A549 (cell line): ENCODE measurements at regions of chr2 and their contacts with region 1.

Region 1: GRCh38 chr2:85288244-85288725 is 39.5 kb downstream of the TGOLN2 start:
- DNase-seq: peak; percentile 82 to 86
- ATAC-seq: peak; percentile 78 to 83
- H3K4me3 ChIP-seq: no peak overlapping the region
- H3K27ac ChIP-seq: peak overlapping the region; percentile 62 to 82
- H3K4me1 ChIP-seq: peaks cover 31% of the 10 kb centered on the region
- CTCF ChIP-seq: no peak
- EP300 ChIP-seq: no peak
- POLR2A ChIP-seq: no peak
- RAD21 ChIP-seq: no peak

Region 2: GRCh38 chr2:85076618-85077274 is 211.5 kb before region 1 on chr2:
- CTCF ChIA-PET with region 1: interaction called, 22 read pairs
- POLR2A ChIA-PET with region 1: no interaction called
- DNase-seq: no peak
- ATAC-seq: peak; percentile 24 to 48; a peak in 3 of 6 replicates
- H3K4me3 ChIP-seq: no peak overlapping the region
- H3K27ac ChIP-seq: no peak overlapping the region
- H3K4me1 ChIP-seq: no peaks in the 10 kb centered on the region
- CTCF ChIP-seq: no peak
- EP300 ChIP-seq: no peak
- POLR2A ChIP-seq: no peak
- RAD21 ChIP-seq: no peak

Region 3: GRCh38 chr2:85119900-85120299 is 168.4 kb before region 1 on chr2:
- CTCF ChIA-PET with region 1: interaction called, 21 read pairs
- POLR2A ChIA-PET with region 1: no interaction called
- DNase-seq: no peak
- ATAC-seq: peak in 1 of 2 experiments; percentile 36; a peak in 1 of 6 replicates
- H3K4me3 ChIP-seq: no peak overlapping the region
- H3K27ac ChIP-seq: no peak overlapping the region
- H3K4me1 ChIP-seq: no peaks in the 10 kb centered on the region
- CTCF ChIP-seq: no peak
- EP300 ChIP-seq: no peak
- POLR2A ChIP-seq: no peak
- RAD21 ChIP-seq: no peak

Region 4: DNA sequence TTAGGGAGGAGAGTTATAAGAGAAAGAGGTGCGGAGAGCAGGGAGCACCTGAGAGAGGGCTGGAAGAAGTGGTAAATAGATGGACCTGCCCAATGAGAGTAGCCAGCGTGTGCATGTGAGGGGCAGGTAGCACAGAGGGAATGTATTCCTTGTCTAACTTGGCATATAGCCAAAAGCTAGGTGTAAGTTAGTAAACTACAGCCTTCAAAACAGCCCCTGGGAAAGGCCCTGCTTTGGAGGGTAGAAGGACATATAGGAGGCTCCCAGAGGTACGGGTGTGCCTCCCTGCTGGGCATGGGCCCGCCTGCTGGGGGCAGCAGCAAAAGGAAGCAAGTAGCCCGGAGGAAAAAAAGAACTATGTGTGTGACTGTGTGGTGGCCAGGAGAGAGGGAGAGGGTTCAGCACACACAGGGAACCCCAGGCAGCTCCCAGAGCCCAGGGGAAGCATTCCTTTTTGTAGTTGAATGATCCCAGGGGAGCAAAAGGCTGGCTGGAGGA is 107.1 kb before region 1 on chr2:
- CTCF ChIA-PET with region 1: interaction called, 15 read pairs
- POLR2A ChIA-PET with region 1: no interaction called
- DNase-seq: no peak
- ATAC-seq: peak in 1 of 2 experiments; percentile 55; a peak in 3 of 6 replicates
- H3K4me3 ChIP-seq: no peak overlapping the region
- H3K27ac ChIP-seq: no peak overlapping the region
- H3K4me1 ChIP-seq: no peaks in the 10 kb centered on the region
- CTCF ChIP-seq: no peak
- EP300 ChIP-seq: no peak
- POLR2A ChIP-seq: no peak
- RAD21 ChIP-seq: no peak

Region 5: DNA sequence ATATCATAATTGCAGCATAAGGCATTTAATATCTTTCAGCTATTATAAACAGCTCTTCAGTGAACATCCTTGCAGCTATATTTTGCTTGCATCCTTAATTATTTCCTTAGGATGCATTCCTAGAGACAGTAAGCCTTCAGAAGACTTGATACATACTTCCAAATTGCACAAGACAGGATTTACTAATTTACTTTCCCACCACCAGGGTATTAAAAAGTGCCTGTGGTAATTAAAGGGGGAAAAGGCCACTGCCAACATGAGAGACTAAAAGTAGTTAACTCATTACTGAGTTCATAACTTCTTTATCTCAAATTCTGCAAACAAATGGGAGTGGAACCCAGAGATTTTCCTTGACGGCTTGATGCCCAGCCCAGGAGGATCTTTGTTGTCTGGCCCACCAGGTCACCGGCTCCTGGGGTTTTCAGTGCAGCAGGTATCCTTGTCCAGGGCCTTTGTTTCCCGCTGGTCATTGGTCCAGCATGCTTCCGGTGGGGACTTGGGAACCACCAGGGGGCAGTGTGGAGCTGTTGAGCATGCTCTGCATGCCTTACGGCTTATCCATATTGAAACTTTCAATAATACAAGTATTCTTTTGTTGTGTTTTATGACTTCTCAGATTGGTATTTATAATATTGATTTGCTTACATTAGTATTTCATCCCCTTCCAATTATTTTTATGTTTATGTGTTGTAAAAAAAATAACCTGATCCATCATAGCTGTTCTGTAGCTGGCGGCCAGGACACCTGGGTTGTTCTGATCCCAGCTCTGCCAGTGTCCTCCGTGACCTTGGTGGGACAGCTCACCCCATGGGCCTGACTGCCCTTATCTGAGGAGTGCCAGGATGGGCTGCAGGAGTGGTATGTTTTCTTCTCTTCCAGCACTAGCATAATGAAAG is 21.9 kb before region 1 on chr2:
- CTCF ChIA-PET with region 1: interaction called, 111 read pairs
- POLR2A ChIA-PET with region 1: no interaction called
- DNase-seq: peak; percentile 67 to 74
- ATAC-seq: peak in 1 of 2 experiments; percentile 93; a peak in 3 of 6 replicates
- H3K4me3 ChIP-seq: no peak overlapping the region
- H3K27ac ChIP-seq: no peak overlapping the region
- H3K4me1 ChIP-seq: no peaks in the 10 kb centered on the region
- CTCF ChIP-seq: peak; percentile 92
- EP300 ChIP-seq: no peak
- POLR2A ChIP-seq: no peak
- RAD21 ChIP-seq: peak; percentile 55 to 68

Region 6: DNA sequence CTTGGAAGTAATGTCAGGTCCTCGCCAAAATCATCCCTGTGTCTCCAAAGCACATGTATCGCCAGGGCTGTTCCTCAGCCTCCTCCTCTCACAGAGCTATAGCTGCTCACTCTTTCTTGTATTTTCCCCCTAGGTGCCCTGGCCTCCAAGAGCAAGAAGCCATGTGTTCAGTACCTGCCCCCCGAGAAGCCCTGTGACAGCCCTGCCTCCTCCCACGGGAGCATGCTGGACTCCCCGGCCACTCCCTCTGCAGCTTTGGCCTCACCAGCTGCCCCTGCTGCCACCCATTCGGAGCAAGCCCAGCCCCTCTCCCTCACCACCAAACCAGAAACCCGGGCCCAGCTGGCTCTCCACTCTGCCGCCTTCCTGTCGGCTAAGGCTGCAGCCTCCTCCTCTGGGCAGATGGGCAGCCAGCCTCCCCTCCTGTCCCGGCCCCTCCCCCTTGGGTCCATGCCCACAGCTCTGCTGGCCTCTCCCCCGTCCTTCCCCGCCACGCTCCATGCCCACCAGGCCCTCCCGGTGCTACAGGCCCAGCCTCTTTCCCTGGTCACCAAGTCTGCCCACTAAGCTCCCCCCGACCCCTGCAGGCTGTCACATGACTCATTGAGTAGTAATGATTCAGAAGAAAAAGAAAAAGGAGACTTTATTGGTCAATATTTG is 20.7 kb after region 1 on chr2:
- CTCF ChIA-PET with region 1: interaction called, 183 read pairs
- POLR2A ChIA-PET with region 1: no interaction called
- DNase-seq: no peak
- ATAC-seq: peak; percentile 21 to 35; a peak in 4 of 6 replicates
- H3K4me3 ChIP-seq: no peak overlapping the region
- H3K27ac ChIP-seq: peak overlapping the region in 1 of 2 experiments; percentile 2; a peak in 1 of 6 replicates
- H3K4me1 ChIP-seq: peaks cover 5% of the 10 kb centered on the region; the same call in 1 of the 3 replicates
- CTCF ChIP-seq: no peak
- EP300 ChIP-seq: no peak
- POLR2A ChIP-seq: no peak
- RAD21 ChIP-seq: no peak